AG04449 (cell line): ENCODE measurements at regions of chr2 and their contacts with region 1.

Region 1: GRCh38 chr2:68121873-68122679 is 35.6 kb upstream of the PNO1 start:
- DNase-seq: peak; percentile 23
- H3K4me3 ChIP-seq: no peak overlapping the region
- CTCF ChIP-seq: peak; percentile 98

Region 2: GRCh38 chr2:68086166-68086565 is 35.9 kb before region 1 on chr2:
- CTCF ChIA-PET with region 1: interaction called, 11 read pairs
- POLR2A ChIA-PET with region 1: no interaction called
- DNase-seq: no peak
- H3K4me3 ChIP-seq: no peak overlapping the region
- CTCF ChIP-seq: no peak

Region 3: DNA sequence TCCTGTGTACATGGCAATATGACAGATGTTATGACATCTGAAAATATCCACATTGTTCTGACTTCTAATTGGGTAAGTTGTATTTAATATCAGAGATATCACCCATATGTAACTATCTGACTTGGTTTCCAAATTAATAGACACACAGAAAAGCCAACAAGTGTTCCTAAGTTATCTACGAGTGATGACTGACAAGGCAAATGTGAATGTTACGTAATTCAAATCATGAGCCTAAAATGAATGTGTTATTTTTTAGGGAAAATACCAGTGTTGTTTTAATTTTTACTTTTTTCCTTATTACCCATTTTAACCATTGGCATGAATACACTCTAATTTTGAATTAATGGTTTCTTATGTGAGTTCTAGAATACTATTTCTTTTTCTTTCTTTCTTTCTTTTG is 19.8 kb after region 1 on chr2:
- CTCF ChIA-PET with region 1: interaction called, 34 read pairs
- POLR2A ChIA-PET with region 1: no interaction called
- DNase-seq: no peak
- H3K4me3 ChIP-seq: no peak overlapping the region
- CTCF ChIP-seq: no peak

Region 4: GRCh38 chr2:68225119-68225632 is 103.1 kb after region 1 on chr2:
- CTCF ChIA-PET with region 1: no interaction called
- POLR2A ChIA-PET with region 1: no interaction called
- DNase-seq: no peak
- H3K4me3 ChIP-seq: no peak overlapping the region
- CTCF ChIP-seq: no peak

Region 5: DNA sequence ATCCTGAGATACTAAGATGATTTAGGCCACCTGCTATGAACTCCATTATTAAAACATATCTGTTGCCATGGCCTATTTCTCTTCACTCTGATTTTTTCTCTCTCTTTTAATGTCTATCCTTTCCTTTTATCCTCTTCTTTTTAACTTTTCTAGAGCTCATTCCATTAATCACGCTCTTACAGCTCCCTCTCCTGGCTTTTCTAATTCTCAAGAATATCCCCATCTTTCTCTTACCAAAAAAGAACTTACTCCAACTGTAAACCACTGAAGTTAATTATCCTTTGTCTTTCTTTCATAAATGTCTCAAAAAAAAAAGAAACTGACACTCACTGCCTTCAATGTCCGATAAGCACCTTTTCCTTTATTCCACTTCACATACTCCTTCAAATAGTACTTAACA is 122.4 kb after region 1 on chr2:
- CTCF ChIA-PET with region 1: interaction called, 29 read pairs
- POLR2A ChIA-PET with region 1: no interaction called
- DNase-seq: no peak
- H3K4me3 ChIP-seq: no peak overlapping the region
- CTCF ChIP-seq: no peak

Region 6: DNA sequence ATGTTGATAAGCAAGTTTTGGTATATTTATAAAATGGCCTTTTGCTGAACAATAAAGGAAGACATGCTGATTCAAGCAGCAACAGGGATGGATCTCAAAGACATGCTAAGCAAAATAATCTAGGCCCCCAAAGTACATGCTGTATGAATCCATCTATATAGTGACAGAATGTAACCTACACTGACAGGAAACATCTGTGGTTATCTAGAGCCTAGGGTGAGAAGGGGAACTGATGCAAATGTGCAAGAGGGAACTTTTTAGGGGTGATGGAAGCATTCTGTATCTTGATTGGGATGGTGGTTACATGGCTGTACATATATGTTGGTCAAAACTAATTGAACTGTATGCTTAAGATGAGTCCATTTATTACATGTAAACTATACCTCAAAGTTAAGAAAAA is 173.4 kb after region 1 on chr2:
- CTCF ChIA-PET with region 1: interaction called, 22 read pairs
- POLR2A ChIA-PET with region 1: no interaction called
- DNase-seq: no peak
- H3K4me3 ChIP-seq: no peak overlapping the region
- CTCF ChIP-seq: no peak

Region 7: DNA sequence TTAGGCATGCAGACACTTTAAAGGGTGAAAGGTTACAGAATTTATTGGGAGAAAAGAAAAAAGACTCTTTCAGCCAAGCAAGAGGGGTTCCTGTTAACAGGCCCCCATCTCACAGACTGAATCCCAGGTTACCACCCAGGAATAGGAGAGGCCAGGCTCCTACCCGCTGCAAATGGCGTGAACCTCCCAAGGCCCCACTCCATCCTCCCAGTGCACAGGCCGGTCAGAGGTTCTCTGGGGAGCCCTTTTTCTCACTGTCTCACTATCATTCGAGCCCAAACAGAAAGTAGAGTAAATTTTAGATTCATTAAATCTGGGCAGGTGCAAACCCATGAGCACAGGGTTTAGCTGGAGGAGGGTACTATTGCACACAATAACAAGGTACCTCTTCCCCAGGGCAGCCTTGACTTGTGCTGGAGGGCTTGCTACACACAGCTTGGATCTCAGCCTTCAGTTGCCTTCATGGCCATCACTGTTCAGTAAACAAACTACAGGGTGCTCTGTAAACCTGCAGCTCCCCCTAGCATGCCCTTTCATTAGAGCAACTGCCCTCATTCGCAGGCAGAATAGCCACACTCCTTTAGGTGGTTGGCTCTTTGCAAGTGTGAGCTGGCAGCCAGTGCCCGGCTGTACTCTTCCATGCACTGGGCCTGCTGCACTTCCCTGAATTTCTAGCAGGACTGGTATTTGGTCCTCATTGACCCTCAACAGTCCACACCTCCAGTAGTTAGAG is 235.7 kb after region 1 on chr2:
- CTCF ChIA-PET with region 1: interaction called, 10 read pairs
- POLR2A ChIA-PET with region 1: no interaction called
- DNase-seq: no peak
- H3K4me3 ChIP-seq: no peak overlapping the region
- CTCF ChIP-seq: peak; percentile 60

Region 8: DNA sequence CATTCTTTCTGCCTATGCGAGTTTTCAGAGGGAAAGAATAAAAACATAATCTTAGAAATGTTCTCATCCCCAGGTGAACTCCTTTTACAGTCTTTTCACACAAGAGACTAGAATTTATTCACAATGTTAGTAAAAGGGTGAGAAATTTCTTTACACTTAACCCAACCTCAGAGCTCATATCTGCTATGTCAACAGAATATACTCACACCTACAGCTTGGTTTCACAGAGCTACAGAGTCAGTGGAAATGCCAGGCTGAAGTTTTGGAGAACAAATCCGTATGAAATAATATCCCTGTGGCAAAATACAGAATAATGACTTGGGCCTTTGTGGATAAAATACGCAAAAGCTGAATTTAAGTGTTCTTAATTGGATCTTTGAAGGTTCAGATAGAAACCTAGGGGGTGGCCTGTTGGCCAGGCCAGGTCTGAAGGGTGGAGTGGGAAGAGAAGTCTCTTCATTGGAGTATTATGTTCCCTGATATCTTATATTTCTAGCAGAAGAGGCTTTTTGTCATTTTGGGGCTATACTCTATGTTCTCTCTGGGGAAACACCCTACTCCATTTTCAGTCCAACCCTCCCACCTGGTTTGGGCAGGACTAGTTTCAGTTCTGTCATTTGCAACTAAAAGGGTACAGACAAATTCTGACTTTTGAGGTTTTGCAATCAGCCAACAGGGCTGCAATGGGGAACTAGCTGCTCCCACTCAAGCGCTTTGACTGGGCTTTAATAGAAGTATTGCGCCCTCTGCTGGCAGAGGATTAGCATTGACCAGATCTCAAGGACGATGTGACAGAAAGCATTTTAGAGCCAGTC is 319.3 kb after region 1 on chr2:
- CTCF ChIA-PET with region 1: interaction called, 113 read pairs
- POLR2A ChIA-PET with region 1: no interaction called
- DNase-seq: no peak
- H3K4me3 ChIP-seq: no peak overlapping the region
- CTCF ChIP-seq: peak; percentile 79